Heart right ventricle (tissue), 16 donors: ENCODE measurements at regions of chr3 and their contacts with region 1.

Region 1: GRCh38 chr3:192816351-192816750 is 89.0 kb upstream of the FGF12 start:
- DNase-seq: no peak
- ATAC-seq: peak in 2 of 8 donors; percentile 28 to 35
- H3K4me3 ChIP-seq: no peak overlapping the region
- H3K27ac ChIP-seq: no peak overlapping the region
- H3K4me1 ChIP-seq: peaks cover 0 to 26% (median 20%) of the 10 kb centered on the region in 9 donors
- H3K27me3 ChIP-seq: no peaks in the 10 kb centered on the region
- CTCF ChIP-seq: peak; percentile 58 to 81 (median 72)

Region 2: GRCh38 chr3:193040836-193041672 is 224.7 kb after region 1 on chr3:
- intact Hi-C with region 1: loop called (anchors 1 to 2 kb)
- DNase-seq: peak in 1 of 2 donors; percentile 11
- ATAC-seq: peak in 5 of 8 donors; percentile 23 to 65 (median 48)
- H3K4me3 ChIP-seq: no peak overlapping the region
- H3K27ac ChIP-seq: no peak overlapping the region
- H3K4me1 ChIP-seq: no peaks in the 10 kb centered on the region
- H3K27me3 ChIP-seq: no peaks in the 10 kb centered on the region
- CTCF ChIP-seq: peak; percentile 16 to 76 (median 58)

Region 3: DNA sequence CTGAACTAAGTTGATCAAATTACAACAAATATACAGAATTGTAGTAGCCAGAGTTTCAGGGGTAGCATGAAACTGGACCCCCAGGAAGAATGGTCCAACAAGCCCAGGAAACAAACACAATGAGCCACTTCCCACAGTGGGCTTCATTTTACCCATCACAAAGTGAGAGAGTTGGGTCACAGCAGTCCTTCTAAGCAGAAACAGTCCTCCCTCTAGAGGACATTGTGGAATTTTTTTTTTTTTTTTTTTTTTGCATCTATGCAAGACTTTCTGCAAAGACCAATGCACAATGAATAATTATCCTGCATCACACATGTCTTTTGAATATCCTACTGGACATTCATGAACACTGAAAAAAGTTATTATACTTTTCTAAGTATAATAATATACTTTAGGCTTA is 636.0 kb after region 1 on chr3:
- intact Hi-C with region 1: loop called in 4 of 10 experiments (anchors 10 kb)
- DNase-seq: no peak
- ATAC-seq: no peak
- H3K4me3 ChIP-seq: no peak overlapping the region
- H3K27ac ChIP-seq: no peak overlapping the region
- H3K4me1 ChIP-seq: no peaks in the 10 kb centered on the region
- H3K27me3 ChIP-seq: no peaks in the 10 kb centered on the region
- CTCF ChIP-seq: peak in 7 of 9 donors; percentile 19 to 43 (median 31)

Region 4: DNA sequence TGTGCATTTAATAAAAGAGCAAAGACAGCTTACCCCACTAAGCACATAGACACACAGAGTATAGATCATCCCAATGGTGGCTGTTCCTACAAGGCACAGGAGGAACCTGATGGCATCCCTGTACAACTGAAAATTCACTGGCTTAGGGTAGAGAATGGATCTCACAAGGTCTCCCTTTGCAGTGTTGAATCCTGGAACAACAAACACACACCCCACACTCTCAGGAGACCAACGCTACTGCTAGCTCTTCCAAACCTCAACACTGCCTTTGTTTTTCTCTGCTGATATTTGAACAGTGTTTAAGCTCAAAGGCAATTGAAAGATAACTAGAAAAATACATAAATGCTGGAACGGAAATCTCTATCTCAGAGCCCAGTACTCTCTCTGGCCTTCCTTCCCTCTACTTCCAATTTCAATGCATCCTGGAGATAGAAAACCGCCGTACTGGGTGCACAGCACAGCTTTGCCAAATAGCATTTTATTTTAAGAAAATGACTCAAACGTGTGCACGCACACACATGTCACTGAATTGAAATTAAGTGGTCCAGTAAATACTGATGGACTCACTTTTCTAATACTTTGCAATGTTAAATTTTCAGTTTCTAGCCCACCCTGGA is 649.7 kb after region 1 on chr3:
- intact Hi-C with region 1: loop called in 2 of 10 experiments (anchors 5 to 10 kb)
- DNase-seq: no peak
- ATAC-seq: no peak
- H3K4me3 ChIP-seq: no peak overlapping the region
- H3K27ac ChIP-seq: no peak overlapping the region
- H3K4me1 ChIP-seq: peaks cover 0 to 7% (median 6%) of the 10 kb centered on the region in 9 donors
- H3K27me3 ChIP-seq: no peaks in the 10 kb centered on the region
- CTCF ChIP-seq: no peak

Region 5: GRCh38 chr3:193572426-193572908 is 756.1 kb after region 1 on chr3:
- intact Hi-C with region 1: loop called in 9 of 10 experiments (anchors 2 to 5 kb)
- DNase-seq: peak in 1 of 2 donors; percentile 49
- ATAC-seq: peak in 7 of 8 donors; percentile 38 to 76 (median 65)
- H3K4me3 ChIP-seq: no peak overlapping the region
- H3K27ac ChIP-seq: no peak overlapping the region
- H3K4me1 ChIP-seq: no peaks in the 10 kb centered on the region
- H3K27me3 ChIP-seq: peaks cover 0 to 3% (median 0%) of the 10 kb centered on the region in 7 donors
- CTCF ChIP-seq: peak; percentile 56 to 87 (median 78)